ENCODE measurements at regions of chr15 and their contacts with region 1.

Region 1: DNA sequence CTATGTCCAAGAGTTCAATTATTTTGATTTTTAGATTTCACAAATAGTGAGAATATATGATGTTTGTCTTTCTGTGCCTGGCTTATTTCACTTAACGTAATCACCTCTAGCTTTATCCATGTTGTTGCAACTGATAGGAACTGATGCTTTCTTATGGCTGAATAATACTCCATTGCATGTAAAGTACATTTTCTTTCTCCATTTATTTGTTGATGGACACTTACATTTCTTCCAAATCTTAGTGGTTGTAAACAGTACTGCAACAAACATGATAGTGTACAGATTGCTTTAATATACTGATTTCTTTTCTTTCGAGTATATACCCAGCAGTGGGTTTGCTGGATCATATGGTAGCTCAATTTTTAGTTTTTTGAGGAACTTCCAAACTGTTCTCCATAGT is 600.6 kb upstream of the SEMA6D start:
- DNase-seq: no peak
- ATAC-seq: no peak
- H3K4me3 ChIP-seq: no peak overlapping the region
- H3K4me3 Mint-ChIP-seq: no peak overlapping the region
- H3K27ac ChIP-seq: no peak overlapping the region
- H3K27ac Mint-ChIP-seq: no peak overlapping the region
- H3K4me1 ChIP-seq: no peaks in the 10 kb centered on the region
- H3K4me1 Mint-ChIP-seq: no peaks in the 10 kb centered on the region
- H3K27me3 ChIP-seq: no peaks in the 10 kb centered on the region
- H3K27me3 Mint-ChIP-seq: no peaks in the 10 kb centered on the region
- CTCF ChIP-seq: no peak

Region 2: GRCh38 chr15:47158573-47158972 is 41.9 kb after region 1 on chr15:
- CTCF ChIA-PET with region 1: no interaction called
- POLR2A ChIA-PET with region 1: no interaction called
- intact Hi-C with region 1: loop called in 1 of 2 experiments (anchors 5 kb)
- DNase-seq: no peak
- ATAC-seq: no peak
- H3K4me3 ChIP-seq: no peak overlapping the region
- H3K4me3 Mint-ChIP-seq: no peak overlapping the region
- H3K27ac ChIP-seq: no peak overlapping the region
- H3K27ac Mint-ChIP-seq: no peak overlapping the region
- H3K4me1 ChIP-seq: no peaks in the 10 kb centered on the region
- H3K4me1 Mint-ChIP-seq: no peaks in the 10 kb centered on the region
- H3K27me3 ChIP-seq: no peaks in the 10 kb centered on the region
- H3K27me3 Mint-ChIP-seq: no peaks in the 10 kb centered on the region
- CTCF ChIP-seq: no peak

Measured in CD4-positive, alpha-beta T cell (primary cell).